ENCODE measurements at regions of chrX and their contacts with region 1.

Region 1: GRCh38 chrX:134764212-134764785 is 106.0 kb upstream of the PLAC1 start:
- DNase-seq: no peak
- H3K4me3 ChIP-seq: no peak overlapping the region
- H3K27ac ChIP-seq: no peak overlapping the region
- H3K4me1 ChIP-seq: no peaks in the 10 kb centered on the region
- H3K27me3 ChIP-seq: no peaks in the 10 kb centered on the region
- CTCF ChIP-seq: peak in 2 of 3 experiments; percentile 49 to 78; a peak in 3 of 4 replicates
- EP300 ChIP-seq: no peak
- POLR2A ChIP-seq: no peak
- RAD21 ChIP-seq: peak; percentile 36 to 51

Region 2: GRCh38 chrX:134715910-134716619 is 48.2 kb before region 1 on chrX:
- CTCF ChIA-PET with region 1: interaction called, 11 read pairs
- POLR2A ChIA-PET with region 1: no interaction called
- DNase-seq: peak in 1 of 2 experiments; percentile 44
- H3K4me3 ChIP-seq: no peak overlapping the region
- H3K27ac ChIP-seq: no peak overlapping the region
- H3K4me1 ChIP-seq: peaks cover 0 to 6% (median 5%) of the 10 kb centered on the region in 4 experiments; a peak in 5 of 7 replicates
- H3K27me3 ChIP-seq: no peaks in the 10 kb centered on the region
- CTCF ChIP-seq: no peak
- EP300 ChIP-seq: no peak
- POLR2A ChIP-seq: no peak
- RAD21 ChIP-seq: no peak

Region 3: GRCh38 chrX:134738986-134739740 is 25.1 kb before region 1 on chrX:
- CTCF ChIA-PET with region 1: no interaction called
- POLR2A ChIA-PET with region 1: no interaction called
- DNase-seq: no peak
- H3K4me3 ChIP-seq: no peak overlapping the region
- H3K27ac ChIP-seq: no peak overlapping the region
- H3K4me1 ChIP-seq: peaks cover 0 to 6% (median 2%) of the 10 kb centered on the region in 4 experiments; a peak in 4 of 7 replicates
- H3K27me3 ChIP-seq: no peaks in the 10 kb centered on the region
- CTCF ChIP-seq: no peak
- EP300 ChIP-seq: no peak
- POLR2A ChIP-seq: no peak
- RAD21 ChIP-seq: no peak

Region 4: DNA sequence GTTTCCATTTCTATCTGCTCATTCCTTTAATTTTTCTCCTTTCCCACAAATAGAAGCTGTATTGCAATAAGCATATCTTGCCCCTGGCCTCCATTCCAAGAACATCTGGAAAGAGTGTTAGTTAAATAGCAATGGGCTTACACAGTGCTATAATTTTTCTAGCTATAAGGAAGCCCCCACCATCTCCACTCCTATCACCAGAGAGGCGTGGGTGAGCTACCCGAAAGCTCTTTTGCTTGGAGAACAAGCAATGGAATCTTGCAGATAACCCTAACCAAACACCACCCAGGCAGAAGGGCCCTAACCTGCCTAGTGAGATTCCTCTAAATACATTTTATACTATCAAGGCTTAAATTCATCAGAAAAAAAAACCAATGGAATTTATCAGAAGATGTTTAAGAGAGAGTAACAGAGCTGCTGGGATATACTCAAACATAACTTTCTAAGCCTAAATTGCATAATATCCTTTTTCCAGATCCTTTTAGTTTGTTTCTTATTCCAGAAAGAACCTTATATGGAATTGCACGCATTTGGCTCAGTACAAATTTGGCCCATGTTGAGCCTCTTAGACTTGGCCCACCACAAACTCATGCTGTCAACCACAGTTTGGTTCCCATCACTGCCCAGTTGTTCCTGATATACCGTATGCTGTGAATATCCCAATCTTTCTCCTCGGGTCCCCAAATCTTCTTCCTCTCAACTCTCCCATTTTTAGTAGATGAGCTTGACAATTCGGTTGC is 14.4 kb before region 1 on chrX:
- CTCF ChIA-PET with region 1: interaction called, 23 read pairs
- POLR2A ChIA-PET with region 1: no interaction called
- DNase-seq: no peak
- H3K4me3 ChIP-seq: no peak overlapping the region
- H3K27ac ChIP-seq: no peak overlapping the region
- H3K4me1 ChIP-seq: no peaks in the 10 kb centered on the region
- H3K27me3 ChIP-seq: no peaks in the 10 kb centered on the region
- CTCF ChIP-seq: no peak
- EP300 ChIP-seq: no peak
- POLR2A ChIP-seq: no peak
- RAD21 ChIP-seq: no peak

Region 5: DNA sequence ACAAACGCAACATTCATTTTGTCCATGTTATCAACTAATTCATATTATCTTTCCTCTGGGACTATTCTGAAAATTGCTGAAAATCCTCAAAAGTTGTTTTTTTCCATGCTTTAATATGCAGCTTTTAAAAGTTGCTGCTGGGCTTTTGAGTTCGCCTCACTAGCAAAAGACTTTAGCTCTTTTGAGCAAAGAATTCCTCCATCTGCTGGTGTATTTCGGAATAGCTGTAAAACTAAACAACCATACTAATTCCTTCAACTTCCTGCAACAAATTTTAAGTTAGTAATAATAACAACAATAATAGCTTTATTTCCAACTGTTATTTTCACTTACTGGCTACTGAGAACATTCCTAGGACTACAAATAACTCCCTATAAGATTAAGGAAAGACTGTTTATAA is 18.5 kb after region 1 on chrX:
- CTCF ChIA-PET with region 1: interaction called, 16 read pairs
- POLR2A ChIA-PET with region 1: no interaction called
- DNase-seq: no peak
- H3K4me3 ChIP-seq: no peak overlapping the region
- H3K27ac ChIP-seq: no peak overlapping the region
- H3K4me1 ChIP-seq: no peaks in the 10 kb centered on the region
- H3K27me3 ChIP-seq: no peaks in the 10 kb centered on the region
- CTCF ChIP-seq: peak in 2 of 3 experiments; percentile 25 to 28; a peak in 2 of 4 replicates
- EP300 ChIP-seq: no peak
- POLR2A ChIP-seq: no peak
- RAD21 ChIP-seq: peak; percentile 24 to 49; a peak in 3 of 4 replicates

Region 6: GRCh38 chrX:134794692-134795091 is 30.4 kb after region 1 on chrX:
- CTCF ChIA-PET with region 1: no interaction called
- POLR2A ChIA-PET with region 1: no interaction called
- DNase-seq: no peak
- H3K4me3 ChIP-seq: no peak overlapping the region
- H3K27ac ChIP-seq: no peak overlapping the region
- H3K4me1 ChIP-seq: peaks cover 0 to 5% (median 2%) of the 10 kb centered on the region in 4 experiments; a peak in 2 of 7 replicates
- H3K27me3 ChIP-seq: no peaks in the 10 kb centered on the region
- CTCF ChIP-seq: no peak
- EP300 ChIP-seq: no peak
- POLR2A ChIP-seq: no peak
- RAD21 ChIP-seq: no peak

Region 7: DNA sequence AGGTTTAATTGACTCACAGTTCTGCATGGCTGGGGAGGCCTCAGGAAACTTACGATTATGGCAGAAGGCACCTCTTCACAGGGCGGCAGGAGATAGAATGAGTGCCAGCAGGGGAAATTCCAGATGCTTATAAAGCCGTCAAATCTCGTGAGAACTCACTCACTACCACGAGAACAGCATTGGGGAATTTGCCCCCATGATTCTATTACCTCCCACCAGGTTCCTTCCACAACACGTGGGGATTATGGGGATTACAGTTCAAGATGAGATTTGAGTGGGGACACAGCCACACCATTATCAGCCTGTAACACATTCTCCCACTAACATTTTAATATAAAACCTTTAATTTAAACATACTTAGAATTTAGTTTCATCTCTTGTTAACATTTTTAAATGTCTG is 81.7 kb after region 1 on chrX:
- CTCF ChIA-PET with region 1: no interaction called
- POLR2A ChIA-PET with region 1: no interaction called
- DNase-seq: no peak
- H3K4me3 ChIP-seq: no peak overlapping the region
- H3K27ac ChIP-seq: no peak overlapping the region
- H3K4me1 ChIP-seq: no peaks in the 10 kb centered on the region
- H3K27me3 ChIP-seq: no peaks in the 10 kb centered on the region
- CTCF ChIP-seq: no peak
- EP300 ChIP-seq: no peak
- POLR2A ChIP-seq: no peak
- RAD21 ChIP-seq: no peak

Measured in H1 (cell line).